Activated naive CD8-positive, alpha-beta T cell treated with anti-CD3 and anti-CD28 coated beads, Interleukin-2, amount 10 ng/mL, durations not matched to agents 7 days and 5 days (primary cell): ENCODE measurements at regions of chr9 and their contacts with region 1.

Region 1: GRCh38 chr9:105385381-105385985 is 62.4 kb upstream of the FSD1L start:
- DNase-seq: peak; percentile 33
- ATAC-seq: peak; percentile 96
- H3K4me3 Mint-ChIP-seq: peak overlapping the region; percentile 95
- H3K27ac Mint-ChIP-seq: peak overlapping the region; percentile 95
- H3K4me1 Mint-ChIP-seq: peaks cover 20% of the 10 kb centered on the region
- H3K27me3 Mint-ChIP-seq: peaks cover 5% of the 10 kb centered on the region

Region 2: GRCh38 chr9:105244003-105244733 is 141.3 kb before region 1 on chr9 and contains the start of gene SLC44A1:
- POLR2A ChIA-PET with region 1: interaction called, 15 read pairs
- DNase-seq: peak; percentile 94
- ATAC-seq: peak; percentile 95
- H3K4me3 Mint-ChIP-seq: peak within 1 kb of the TSS; percentile 87
- H3K27ac Mint-ChIP-seq: peak within 1 kb of the TSS; percentile 72
- H3K4me1 Mint-ChIP-seq: peaks cover 18% of the 10 kb centered on the region
- H3K27me3 Mint-ChIP-seq: peaks cover 68% of the 10 kb centered on the region
- total RNA-seq, gene SLC44A1: 12.4 to 13.8 TPM

Region 3: DNA sequence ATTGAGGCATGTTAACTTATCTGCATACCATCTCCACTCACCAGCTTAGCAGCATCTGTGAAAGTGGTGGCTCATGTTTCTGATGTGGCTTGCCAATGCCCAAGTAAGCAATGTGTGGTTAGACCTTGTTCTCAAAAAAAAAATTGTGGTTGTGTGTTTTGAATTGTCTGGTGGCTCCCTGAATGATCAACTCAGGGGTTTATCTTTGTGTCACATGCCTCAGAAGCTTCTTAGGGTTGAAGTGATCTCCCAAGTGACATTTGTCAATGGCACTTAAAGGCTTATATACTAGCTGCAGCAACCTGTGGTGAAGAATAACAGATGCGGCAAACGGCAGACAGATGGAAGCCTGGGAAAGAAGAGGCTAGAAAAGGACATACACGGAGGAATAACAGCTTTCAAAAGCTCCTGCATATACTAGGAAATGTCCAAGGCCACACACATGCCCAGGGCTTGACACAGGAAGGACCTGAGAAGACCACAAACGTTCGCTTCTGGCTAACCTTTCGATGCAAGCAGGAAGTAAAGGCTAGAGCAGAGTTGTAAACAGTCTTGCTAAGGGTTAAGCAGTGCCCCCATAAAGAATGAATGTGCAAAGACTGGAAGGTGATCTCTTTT is 20.1 kb after region 1 on chr9:
- POLR2A ChIA-PET with region 1: interaction called, 12 read pairs
- DNase-seq: peak; percentile 58
- ATAC-seq: peak; percentile 93
- H3K4me3 Mint-ChIP-seq: peak overlapping the region; percentile 80
- H3K27ac Mint-ChIP-seq: peak overlapping the region; percentile 86
- H3K4me1 Mint-ChIP-seq: peaks cover 39% of the 10 kb centered on the region
- H3K27me3 Mint-ChIP-seq: peaks cover 71% of the 10 kb centered on the region